Sciatic nerve (tissue), 2 donors: ENCODE measurements at regions of chr7 and their contacts with region 1.

Region 1: DNA sequence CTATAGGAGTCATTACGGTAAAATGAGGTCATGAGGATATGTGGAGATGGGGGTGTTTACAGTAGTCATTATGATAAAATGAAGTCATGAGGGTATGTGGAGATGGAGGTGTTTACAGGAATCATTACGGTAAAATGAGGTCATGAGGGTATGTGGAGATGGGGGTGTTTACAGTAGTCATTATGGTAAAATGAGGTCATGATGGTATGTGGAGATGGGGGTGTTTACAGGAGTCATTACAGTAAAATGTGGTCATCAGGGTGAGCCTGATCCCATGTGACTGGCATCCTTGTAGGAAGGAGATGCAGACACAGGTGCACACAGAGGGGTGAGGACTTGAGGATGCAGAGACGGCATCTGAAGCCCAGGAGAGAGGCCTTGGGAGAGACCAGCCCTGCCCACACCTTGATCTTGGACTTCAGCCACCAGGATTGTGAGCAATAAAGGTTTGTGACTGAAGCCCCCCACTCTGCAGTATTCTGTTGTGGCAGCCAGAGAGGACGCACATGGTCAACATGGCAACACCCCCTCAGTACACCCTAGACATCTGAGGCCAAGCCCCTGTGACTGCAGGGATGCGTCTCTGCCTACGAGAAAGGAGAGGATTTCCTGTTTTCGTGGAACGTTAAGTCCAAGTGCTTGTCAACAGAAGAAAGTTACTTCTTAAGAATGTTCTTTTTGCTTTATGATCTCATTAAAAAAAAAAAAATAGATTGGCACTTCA is 544.4 kb downstream of the DNAJB6 start:
- DNase-seq: no peak
- ATAC-seq: no peak

Region 2: GRCh38 chr7:157432957-157433576 is 448.1 kb before region 1 on chr7:
- intact Hi-C with region 1: loop called (anchors 10 kb)
- DNase-seq: peak; percentile 64
- ATAC-seq: peak; percentile 63